Naive thymus-derived CD4-positive, alpha-beta T cell (primary cell): ENCODE measurements at regions of chr3 and their contacts with region 1.

Region 1: GRCh38 chr3:133506215-133506901 is 67.1 kb upstream of the CDV3 start:
- DNase-seq: peak in 7 of 9 donors; percentile 23 to 60 (median 50)
- ATAC-seq: peak; percentile 93
- H3K4me3 ChIP-seq: peak overlapping the region; percentile 1
- H3K4me3 Mint-ChIP-seq: peak overlapping the region; percentile 71 to 93 (median 82)
- H3K27ac ChIP-seq: peak overlapping the region; percentile 65
- H3K27ac Mint-ChIP-seq: peak overlapping the region; percentile 88 to 97 (median 94)
- H3K4me1 ChIP-seq: no peaks in the 10 kb centered on the region
- H3K4me1 Mint-ChIP-seq: peaks cover 10 to 19% (median 17%) of the 10 kb centered on the region in 7 donors
- H3K27me3 ChIP-seq: no peaks in the 10 kb centered on the region
- H3K27me3 Mint-ChIP-seq: no peaks in the 10 kb centered on the region

Region 2: GRCh38 chr3:132641837-132642538 is 864.4 kb before region 1 on chr3:
- CTCF ChIA-PET with region 1: no interaction called
- POLR2A ChIA-PET with region 1: no interaction called
- intact Hi-C with region 1: no loop called
- DNase-seq: peak in 5 of 9 donors; percentile 17 to 45 (median 36)
- ATAC-seq: peak; percentile 67
- H3K4me3 ChIP-seq: no peak overlapping the region
- H3K4me3 Mint-ChIP-seq: no peak overlapping the region
- H3K27ac ChIP-seq: no peak overlapping the region
- H3K27ac Mint-ChIP-seq: no peak overlapping the region
- H3K4me1 ChIP-seq: no peaks in the 10 kb centered on the region
- H3K4me1 Mint-ChIP-seq: peaks cover 0 to 11% (median 3%) of the 10 kb centered on the region in 7 donors
- H3K27me3 ChIP-seq: no peaks in the 10 kb centered on the region
- H3K27me3 Mint-ChIP-seq: no peaks in the 10 kb centered on the region

Region 3: DNA sequence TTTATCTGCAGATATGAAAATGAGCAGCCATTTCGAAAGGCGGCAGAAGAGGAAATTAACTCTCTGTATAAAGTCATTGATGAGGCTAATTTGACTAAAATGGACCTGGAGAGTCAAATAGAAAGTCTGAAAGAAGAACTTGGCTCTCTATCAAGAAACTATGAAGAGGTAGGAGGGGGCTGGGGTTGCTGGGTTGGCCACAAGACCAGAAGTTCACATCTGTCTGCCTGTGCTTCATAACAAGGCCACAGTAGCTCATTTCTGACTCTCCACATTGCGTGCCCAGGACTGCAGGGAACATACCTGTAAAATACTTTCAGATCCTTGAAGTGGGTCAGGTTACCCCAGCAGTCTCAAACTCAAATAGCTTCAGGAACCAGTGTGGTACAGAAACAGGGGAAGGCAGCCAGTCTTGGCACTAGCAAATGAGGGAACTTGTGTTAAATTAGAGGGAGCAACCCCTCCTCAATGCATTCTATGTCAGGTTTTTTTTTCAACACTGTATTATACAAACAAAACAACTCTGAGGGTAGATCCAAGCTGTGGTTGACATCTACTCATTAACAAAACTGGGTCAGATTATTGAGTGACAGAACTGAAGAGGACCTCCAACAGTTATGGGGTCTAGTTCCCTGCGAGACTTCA is 57.8 kb before region 1 on chr3:
- CTCF ChIA-PET with region 1: no interaction called
- POLR2A ChIA-PET with region 1: no interaction called
- intact Hi-C with region 1: loop called in 1 of 2 experiments (anchors 5 kb)
- DNase-seq: peak in 1 of 9 donors; percentile 41
- ATAC-seq: peak; percentile 76
- H3K4me3 ChIP-seq: no peak overlapping the region
- H3K4me3 Mint-ChIP-seq: peak overlapping the region in 3 of 10 donors; percentile 31 to 54 (median 36)
- H3K27ac ChIP-seq: no peak overlapping the region
- H3K27ac Mint-ChIP-seq: peak overlapping the region in 8 of 9 donors; percentile 14 to 87 (median 70)
- H3K4me1 ChIP-seq: peaks cover 5 to 14% of the 10 kb centered on the region in 2 donors
- H3K4me1 Mint-ChIP-seq: peaks cover 7 to 26% (median 15%) of the 10 kb centered on the region in 7 donors
- H3K27me3 ChIP-seq: no peaks in the 10 kb centered on the region
- H3K27me3 Mint-ChIP-seq: no peaks in the 10 kb centered on the region